ENCODE measurements at regions of chr1 and their contacts with region 1.

Region 1: DNA sequence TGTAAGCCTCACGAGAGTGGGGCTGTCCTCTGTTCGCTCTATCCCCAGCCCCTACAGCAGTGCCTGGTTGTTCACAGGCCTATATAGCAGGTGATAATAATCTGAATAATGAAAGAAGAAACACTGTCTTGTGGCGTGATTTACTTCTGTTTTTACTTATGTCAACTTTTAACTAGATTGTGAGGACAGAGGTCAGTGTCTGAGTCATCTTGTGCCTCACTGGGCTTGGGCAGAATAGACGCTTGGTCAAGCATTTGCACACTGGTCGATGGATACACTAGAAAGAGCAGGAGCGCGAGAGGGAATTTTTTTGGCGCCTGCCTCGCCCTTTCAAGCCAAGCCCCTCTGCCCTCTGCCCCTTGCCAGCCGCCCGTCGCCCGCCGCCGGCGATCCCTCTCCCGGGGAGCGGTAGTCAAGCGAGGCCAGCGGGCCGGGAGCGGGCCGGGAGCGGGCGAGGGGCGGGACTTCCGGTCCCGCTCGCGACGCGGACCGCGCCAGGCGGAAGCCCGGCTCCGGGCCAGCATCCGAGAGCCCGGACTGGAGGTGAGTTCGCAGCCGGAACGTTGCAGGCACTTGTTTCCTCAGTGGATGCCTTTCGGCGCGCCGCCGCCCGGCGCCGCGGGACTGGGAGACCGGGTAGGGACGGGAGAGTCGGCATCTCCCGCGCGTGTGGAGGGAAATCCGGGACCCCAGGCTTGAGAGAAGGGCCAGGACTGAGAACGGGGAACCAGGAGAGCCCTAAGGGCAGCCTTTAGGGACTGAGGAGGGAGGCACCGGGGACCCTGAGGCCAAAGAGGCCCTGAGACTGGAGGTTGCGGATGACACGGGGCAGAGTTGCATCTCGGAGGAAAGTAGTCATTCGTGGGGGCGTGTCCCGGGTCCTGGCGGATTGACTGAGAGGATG is at the start of gene DISP1:
- DNase-seq: peak; percentile 83 to 91 (median 88)
- ATAC-seq: peak; percentile 85 to 98 (median 98)
- H3K4me3 ChIP-seq: peak within 1 kb of the TSS; percentile 64 to 93 (median 87)
- H3K27ac ChIP-seq: peak within 1 kb of the TSS; percentile 49 to 97 (median 87)
- H3K4me1 ChIP-seq: peaks cover 0 to 37% (median 14%) of the 10 kb centered on the region in 12 donors
- H3K27me3 ChIP-seq: peaks cover 0 to 3% (median 0%) of the 10 kb centered on the region in 9 donors
- CTCF ChIP-seq: no peak
- POLR2A ChIP-seq: peak in 1 of 2 donors; percentile 59
- total RNA-seq, gene DISP1: 3.5 to 16.3 (median 5.9) TPM

Region 2: GRCh38 chr1:222654849-222655248 is 159.9 kb before region 1 on chr1:
- intact Hi-C with region 1: no loop called
- DNase-seq: peak in 2 of 5 donors; percentile 37 to 45
- ATAC-seq: peak in 3 of 4 donors; percentile 70 to 91 (median 70)
- H3K4me3 ChIP-seq: peak overlapping the region in 1 of 12 donors; percentile 10
- H3K27ac ChIP-seq: peak overlapping the region in 6 of 12 donors; percentile 3 to 85 (median 53)
- H3K4me1 ChIP-seq: peaks cover 0 to 18% (median 0%) of the 10 kb centered on the region in 12 donors
- H3K27me3 ChIP-seq: no peaks in the 10 kb centered on the region
- CTCF ChIP-seq: peak in 2 of 12 donors; percentile 15 to 16
- POLR2A ChIP-seq: no peak

Region 3: DNA sequence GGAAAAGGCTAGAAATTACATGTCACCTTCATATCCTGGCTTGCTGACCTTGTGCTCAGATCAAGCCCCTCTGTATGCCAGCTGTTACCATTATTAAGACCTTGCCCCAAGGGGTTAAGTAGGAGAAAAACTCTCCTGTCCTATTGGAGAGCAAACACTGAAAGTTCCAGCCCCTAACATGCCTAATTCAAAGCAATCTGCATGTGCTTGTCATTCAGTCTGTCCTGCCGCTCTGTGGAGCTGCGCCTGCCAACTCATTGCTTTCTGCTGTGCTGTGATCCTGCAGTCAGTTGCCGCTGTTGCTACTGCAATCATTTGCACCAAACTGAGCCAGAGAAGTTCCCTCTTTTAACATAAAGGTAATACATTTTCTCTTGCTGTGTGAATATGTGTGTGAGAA is 113.4 kb after region 1 on chr1:
- intact Hi-C with region 1: loop called in 3 of 10 experiments (anchors 1 to 10 kb)
- DNase-seq: peak; percentile 68 to 78 (median 69)
- ATAC-seq: peak; percentile 93 to 99 (median 98)
- H3K4me3 ChIP-seq: peak overlapping the region; percentile 1 to 63 (median 45)
- H3K27ac ChIP-seq: peak overlapping the region in 11 of 12 donors; percentile 5 to 62 (median 27)
- H3K4me1 ChIP-seq: peaks cover 0 to 48% (median 29%) of the 10 kb centered on the region in 12 donors
- H3K27me3 ChIP-seq: no peaks in the 10 kb centered on the region
- CTCF ChIP-seq: peak in 4 of 12 donors; percentile 22 to 41 (median 30)
- POLR2A ChIP-seq: peak in 1 of 2 donors; percentile 58

Region 4: DNA sequence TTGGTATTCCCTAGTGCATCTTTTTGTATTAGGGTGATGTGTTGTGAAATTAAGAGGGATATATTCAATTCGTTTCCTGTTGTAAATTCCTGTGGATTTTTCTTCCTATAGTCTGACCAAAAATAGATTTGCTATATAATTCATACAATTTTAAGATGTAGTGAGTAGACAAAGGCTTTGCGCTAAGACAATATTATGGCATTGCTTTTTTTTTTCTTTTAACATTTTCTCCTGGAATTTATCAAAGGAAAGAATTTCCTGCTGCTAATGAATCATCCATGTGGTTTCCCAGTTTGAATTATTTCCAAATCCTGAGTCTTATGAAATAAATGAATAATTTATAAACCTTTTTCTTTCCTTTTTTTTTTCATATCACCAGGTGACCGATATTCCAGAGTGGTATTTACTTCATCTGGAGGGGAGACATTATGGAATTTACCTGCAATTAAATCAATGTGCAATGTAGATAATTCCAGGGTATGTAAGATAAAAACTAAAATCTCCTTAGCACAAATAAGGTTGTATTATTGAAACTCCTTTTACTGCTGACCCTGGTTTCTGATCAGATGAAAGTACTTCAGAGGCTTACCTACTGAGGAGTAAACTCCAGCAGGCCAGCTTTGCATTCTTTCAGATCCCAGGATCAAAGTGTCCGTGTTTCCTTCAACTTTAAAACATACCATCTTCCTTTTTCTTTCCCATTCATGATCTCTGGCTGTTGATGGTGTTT is 179.9 kb after region 1 on chr1:
- intact Hi-C with region 1: loop called in 1 of 10 experiments (anchors 10 kb)
- DNase-seq: no peak
- ATAC-seq: peak in 2 of 4 donors; percentile 10 to 16
- H3K4me3 ChIP-seq: no peak overlapping the region
- H3K27ac ChIP-seq: peak overlapping the region in 9 of 12 donors; percentile 19 to 64 (median 39)
- H3K4me1 ChIP-seq: peaks cover 5 to 35% (median 24%) of the 10 kb centered on the region in 12 donors
- H3K27me3 ChIP-seq: no peaks in the 10 kb centered on the region
- CTCF ChIP-seq: no peak
- POLR2A ChIP-seq: no peak